ENCODE measurements at regions of chr1 and their contacts with region 1.

Region 1: GRCh38 chr1:9426291-9426711 is 113.0 kb upstream of the SLC25A33 start:
- DNase-seq: peak; percentile 92 to 100 (median 99)
- H3K4me3 ChIP-seq: peak overlapping the region in 3 of 7 experiments; percentile 26 to 56 (median 48)
- H3K27ac ChIP-seq: no peak overlapping the region
- H3K4me1 ChIP-seq: peaks cover 13 to 56% (median 48%) of the 10 kb centered on the region in 4 experiments
- H3K27me3 ChIP-seq: peaks cover 0 to 7% (median 0%) of the 10 kb centered on the region in 5 experiments

Region 2: GRCh38 chr1:9292361-9293240 is 133.7 kb before region 1 on chr1 and contains the start of gene SPSB1:
- CTCF ChIA-PET with region 1: interaction called, 10 read pairs
- POLR2A ChIA-PET with region 1: no interaction called
- DNase-seq: peak; percentile 74 to 83 (median 81)
- H3K4me3 ChIP-seq: peak within 1 kb of the TSS; percentile 32 to 73 (median 67)
- H3K27ac ChIP-seq: no peak within 1 kb of the TSS
- H3K4me1 ChIP-seq: peaks cover 0 to 27% (median 21%) of the 10 kb centered on the region in 4 experiments
- H3K27me3 ChIP-seq: peaks cover 0 to 32% (median 13%) of the 10 kb centered on the region in 5 experiments

Region 3: DNA sequence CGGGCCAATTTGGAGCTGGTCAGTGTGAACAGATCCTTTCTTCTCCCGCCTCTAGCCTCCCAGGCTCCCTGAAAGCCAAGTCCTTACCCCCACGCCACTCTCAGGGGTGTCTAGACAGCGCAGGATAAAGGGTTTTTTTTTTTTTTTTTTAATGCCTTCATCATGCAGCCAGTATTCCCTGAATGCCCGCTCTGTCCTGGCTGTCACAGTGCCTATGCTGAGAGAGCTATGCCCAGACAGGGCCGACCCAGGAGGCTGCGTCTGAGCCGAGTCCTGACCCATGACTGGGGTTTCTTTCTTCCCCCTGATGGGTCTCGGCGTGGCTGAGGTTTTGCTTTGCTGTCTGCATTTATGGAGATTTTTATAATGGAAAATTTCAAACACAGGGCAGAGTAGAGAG is 115.3 kb before region 1 on chr1:
- CTCF ChIA-PET with region 1: no interaction called
- POLR2A ChIA-PET with region 1: no interaction called
- DNase-seq: no peak
- H3K4me3 ChIP-seq: no peak overlapping the region
- H3K27ac ChIP-seq: no peak overlapping the region
- H3K4me1 ChIP-seq: peaks cover 0 to 9% (median 5%) of the 10 kb centered on the region in 4 experiments
- H3K27me3 ChIP-seq: no peaks in the 10 kb centered on the region

Region 4: GRCh38 chr1:9399510-9400424 is 26.5 kb before region 1 on chr1:
- CTCF ChIA-PET with region 1: interaction called, 27 read pairs
- POLR2A ChIA-PET with region 1: interaction called, 26 read pairs
- DNase-seq: peak in 2 of 3 donors; percentile 87 to 91
- H3K4me3 ChIP-seq: peak overlapping the region in 3 of 7 experiments; percentile 19 to 38 (median 26)
- H3K27ac ChIP-seq: peak overlapping the region in 1 of 2 experiments; percentile 25
- H3K4me1 ChIP-seq: peaks cover 0 to 45% (median 39%) of the 10 kb centered on the region in 4 experiments
- H3K27me3 ChIP-seq: no peaks in the 10 kb centered on the region

Region 5: GRCh38 chr1:9413148-9413876 is 13.0 kb before region 1 on chr1:
- CTCF ChIA-PET with region 1: interaction called, 20 read pairs
- POLR2A ChIA-PET with region 1: interaction called, 8 read pairs
- DNase-seq: peak in 2 of 3 donors; percentile 66 to 71
- H3K4me3 ChIP-seq: no peak overlapping the region
- H3K27ac ChIP-seq: no peak overlapping the region
- H3K4me1 ChIP-seq: peaks cover 0 to 27% (median 17%) of the 10 kb centered on the region in 4 experiments
- H3K27me3 ChIP-seq: no peaks in the 10 kb centered on the region

Region 6: GRCh38 chr1:10484521-10484920 is 1058.2 kb after region 1 on chr1:
- CTCF ChIA-PET with region 1: no interaction called
- POLR2A ChIA-PET with region 1: no interaction called
- DNase-seq: no peak
- H3K4me3 ChIP-seq: no peak overlapping the region
- H3K27ac ChIP-seq: peak overlapping the region in 1 of 2 experiments; percentile 3
- H3K4me1 ChIP-seq: peaks cover 0 to 8% (median 2%) of the 10 kb centered on the region in 4 experiments
- H3K27me3 ChIP-seq: no peaks in the 10 kb centered on the region

Measured in common myeloid progenitor, CD34-positive (primary cell).